Motor neuron (in vitro differentiated cells): ENCODE measurements at regions of chr11 and their contacts with region 1.

Region 1: GRCh38 chr11:61460474-61460881 is 30.6 kb downstream of the SDHAF2 start:
- ATAC-seq: peak in 4 of 8 experiments; percentile 21 to 85 (median 54)
- H3K4me3 ChIP-seq: no peak overlapping the region
- H3K27ac ChIP-seq: no peak overlapping the region
- H3K4me1 ChIP-seq: no peaks in the 10 kb centered on the region

Region 2: DNA sequence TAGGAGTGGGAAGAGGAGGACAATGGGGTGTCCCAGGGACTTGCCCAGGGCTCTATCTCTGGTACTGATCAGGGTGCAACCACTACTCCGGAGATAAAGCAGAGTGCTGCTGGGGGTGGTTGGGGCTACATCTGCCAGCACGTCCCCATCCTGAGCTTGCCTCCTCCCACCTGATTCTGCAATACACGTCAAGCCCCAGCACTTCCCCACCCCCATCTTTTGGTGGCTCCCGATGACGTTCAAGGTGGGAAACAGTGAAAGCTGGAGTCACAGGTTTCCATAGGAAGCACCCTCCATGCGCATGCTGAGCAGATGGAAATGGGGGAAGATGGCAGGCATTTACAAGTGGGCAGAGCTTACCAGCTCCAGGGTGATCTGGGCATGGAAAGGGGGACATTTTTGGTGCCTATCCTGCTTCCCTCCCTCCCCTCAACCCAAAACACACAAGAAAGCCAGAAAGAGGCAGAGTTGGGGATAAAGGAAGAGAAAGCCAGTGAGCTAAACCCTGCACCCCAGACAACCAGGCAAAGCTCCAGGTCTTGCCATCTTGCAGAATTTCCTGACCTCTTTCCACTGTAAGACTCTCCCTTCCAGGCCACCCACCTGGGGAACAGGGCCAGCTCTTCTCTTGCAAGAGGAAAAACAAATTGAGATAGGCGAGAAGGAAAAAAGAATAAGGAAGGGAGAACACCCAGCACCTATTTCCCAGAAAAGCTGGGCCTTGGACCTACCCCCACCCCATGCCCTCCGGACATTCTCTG is 104.6 kb after region 1 on chr11:
- in situ Hi-C with region 1: no loop called
- ATAC-seq: no peak
- H3K4me3 ChIP-seq: no peak overlapping the region
- H3K27ac ChIP-seq: no peak overlapping the region
- H3K4me1 ChIP-seq: peaks cover 43 to 46% of the 10 kb centered on the region in 2 donors

Region 3: DNA sequence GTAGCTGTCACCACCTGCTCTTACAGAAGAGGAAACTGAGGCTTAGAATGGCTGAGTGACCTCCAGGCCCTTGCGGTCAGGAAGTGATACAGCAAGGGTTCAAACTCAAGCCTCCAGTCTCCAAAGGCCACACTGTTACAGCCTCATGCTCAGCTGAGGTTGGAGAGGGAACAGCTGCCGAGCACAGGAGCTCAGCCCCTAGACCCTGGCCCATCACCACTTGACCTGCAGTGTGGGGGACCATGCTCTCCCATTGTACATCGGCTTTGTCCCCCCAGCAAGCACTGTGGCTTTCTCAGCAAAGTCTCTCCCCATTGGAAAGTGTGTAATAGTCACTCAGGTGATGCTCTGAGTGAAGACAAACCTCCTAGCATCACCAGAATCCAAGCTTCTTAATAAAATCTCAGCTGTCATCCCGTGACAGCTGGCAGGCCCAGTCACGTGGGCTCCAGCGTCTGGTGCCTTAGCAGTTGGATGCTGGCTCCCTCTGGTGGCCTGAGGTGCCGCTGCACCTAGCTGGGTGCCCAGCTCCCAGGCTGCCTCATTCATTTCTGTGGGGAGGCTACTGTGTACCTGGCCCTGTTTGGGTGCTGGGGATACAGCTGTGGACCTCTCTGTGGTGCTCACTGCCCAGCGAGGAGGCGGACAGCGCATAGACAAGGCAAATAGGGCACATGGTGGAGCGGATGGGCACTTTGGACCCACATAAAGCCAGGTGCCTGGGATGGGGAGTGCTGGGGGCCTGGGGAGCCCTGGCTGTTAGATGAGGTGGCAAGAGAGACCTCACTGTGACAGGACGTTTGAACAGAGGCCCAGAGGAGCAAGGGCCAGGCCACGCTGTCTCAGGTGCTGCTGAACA is 272.9 kb after region 1 on chr11:
- in situ Hi-C with region 1: loop called in 1 of 9 experiments (anchors 25 kb)
- ATAC-seq: peak; percentile 59 to 91 (median 86)
- H3K4me3 ChIP-seq: no peak overlapping the region
- H3K27ac ChIP-seq: peak overlapping the region; percentile 11 to 64
- H3K4me1 ChIP-seq: peaks cover 9% of the 10 kb centered on the region in 2 donors

Region 4: DNA sequence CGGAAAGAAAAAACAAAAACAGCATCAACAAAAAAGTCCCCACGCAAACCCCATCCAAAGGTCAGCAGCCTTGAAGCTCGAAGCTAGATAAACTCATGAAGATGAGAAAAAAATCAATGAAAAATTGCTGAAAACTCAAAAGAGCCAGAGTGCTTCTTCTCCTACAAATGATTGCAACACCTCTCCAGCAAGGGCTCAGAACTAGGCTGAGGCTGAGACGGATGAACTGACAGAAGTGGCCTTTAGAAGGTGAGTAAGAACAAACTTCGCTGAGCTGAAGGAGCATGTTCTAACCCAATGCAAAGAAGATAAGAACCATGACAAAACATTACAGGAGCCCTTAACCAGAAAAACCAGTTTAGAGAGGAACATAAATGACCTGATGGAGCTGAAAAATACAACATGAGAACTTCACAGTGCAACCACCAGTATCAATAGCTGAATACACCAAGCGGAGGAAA is 525.4 kb after region 1 on chr11:
- in situ Hi-C with region 1: no loop called
- ATAC-seq: no peak
- H3K4me3 ChIP-seq: no peak overlapping the region
- H3K27ac ChIP-seq: no peak overlapping the region
- H3K4me1 ChIP-seq: no peaks in the 10 kb centered on the region

Region 5: DNA sequence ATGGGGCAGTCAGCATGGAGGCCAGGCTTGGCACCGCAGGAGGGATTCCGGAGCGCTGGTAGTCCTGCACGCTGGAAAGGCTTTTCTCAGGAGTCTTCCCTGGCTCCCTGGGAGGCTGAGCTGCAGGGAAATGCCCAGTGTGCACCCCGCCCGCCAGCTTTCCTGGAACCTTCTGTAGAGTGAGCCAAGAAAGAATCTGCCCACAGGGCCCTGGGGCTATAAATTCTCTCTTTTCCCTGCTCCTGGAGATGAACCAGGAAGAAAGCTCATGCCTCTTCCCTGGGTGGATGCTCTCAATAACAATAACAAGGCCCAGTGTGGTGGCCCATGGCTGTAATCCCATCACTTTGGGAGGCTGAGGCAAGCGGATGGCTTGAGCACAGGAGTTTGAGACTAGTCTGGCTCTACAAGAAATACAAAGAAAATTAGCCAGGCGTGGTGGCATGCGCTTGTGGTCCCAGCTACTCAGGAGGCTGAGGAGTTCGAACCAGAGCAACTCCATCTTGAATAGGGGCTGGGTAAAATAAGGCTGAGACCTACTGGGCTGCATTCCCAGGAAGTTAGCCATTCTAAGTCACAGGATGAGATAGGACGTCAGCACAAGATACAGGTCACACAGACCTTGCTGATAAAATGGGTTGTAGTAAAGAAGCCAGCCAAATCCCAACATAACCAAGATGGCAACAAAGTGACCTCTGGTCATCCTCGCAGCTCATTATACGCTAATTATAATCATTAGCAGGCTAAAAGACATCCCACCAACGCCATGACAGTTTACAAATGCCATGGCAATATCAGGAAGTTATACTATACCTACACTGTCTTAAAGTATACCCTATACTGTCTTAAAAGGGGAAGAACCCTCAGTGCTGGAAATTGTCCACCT is 553.4 kb after region 1 on chr11:
- in situ Hi-C with region 1: no loop called
- ATAC-seq: peak in 3 of 8 experiments; percentile 85 to 96 (median 87)
- H3K4me3 ChIP-seq: no peak overlapping the region
- H3K27ac ChIP-seq: no peak overlapping the region
- H3K4me1 ChIP-seq: peaks cover 6 to 11% of the 10 kb centered on the region in 2 donors